Aorta (tissue), 5 donors: ENCODE measurements at regions of chr17 and their contacts with region 1.

Region 1: GRCh38 chr17:33674685-33675084 is 381.6 kb upstream of the ASIC2 start:
- DNase-seq: peak in 1 of 2 donors; percentile 53
- ATAC-seq: peak; percentile 84
- H3K4me3 ChIP-seq: no peak overlapping the region
- H3K27ac ChIP-seq: no peak overlapping the region
- H3K4me1 ChIP-seq: no peaks in the 10 kb centered on the region
- H3K27me3 ChIP-seq: no peaks in the 10 kb centered on the region

Region 2: GRCh38 chr17:33021731-33022408 is 652.8 kb before region 1 on chr17:
- intact Hi-C with region 1: loop called in 1 of 2 experiments (anchors 10 kb)
- DNase-seq: no peak
- ATAC-seq: no peak
- H3K4me3 ChIP-seq: no peak overlapping the region
- H3K27ac ChIP-seq: no peak overlapping the region
- H3K4me1 ChIP-seq: no peaks in the 10 kb centered on the region
- H3K27me3 ChIP-seq: no peaks in the 10 kb centered on the region

Region 3: GRCh38 chr17:33038740-33039139 is 635.9 kb before region 1 on chr17:
- intact Hi-C with region 1: loop called in 1 of 2 experiments (anchors 5 kb)
- DNase-seq: peak in 1 of 2 donors; percentile 55
- ATAC-seq: no peak
- H3K4me3 ChIP-seq: no peak overlapping the region
- H3K27ac ChIP-seq: no peak overlapping the region
- H3K4me1 ChIP-seq: no peaks in the 10 kb centered on the region
- H3K27me3 ChIP-seq: peaks cover 0 to 2% of the 10 kb centered on the region in 2 donors

Region 4: GRCh38 chr17:33154869-33155455 is 519.7 kb before region 1 on chr17:
- intact Hi-C with region 1: loop called in 1 of 2 experiments (anchors 10 kb)
- DNase-seq: no peak
- ATAC-seq: no peak
- H3K4me3 ChIP-seq: no peak overlapping the region
- H3K27ac ChIP-seq: no peak overlapping the region
- H3K4me1 ChIP-seq: no peaks in the 10 kb centered on the region
- H3K27me3 ChIP-seq: no peaks in the 10 kb centered on the region

Region 5: GRCh38 chr17:33520426-33521330 is 154.0 kb before region 1 on chr17:
- intact Hi-C with region 1: loop called in 1 of 2 experiments (anchors 10 kb)
- DNase-seq: no peak
- ATAC-seq: no peak
- H3K4me3 ChIP-seq: no peak overlapping the region
- H3K27ac ChIP-seq: no peak overlapping the region
- H3K4me1 ChIP-seq: no peaks in the 10 kb centered on the region
- H3K27me3 ChIP-seq: no peaks in the 10 kb centered on the region